Thyroid gland (tissue), 4 donors: ENCODE measurements at regions of chr1 and their contacts with region 1.

Region 1: DNA sequence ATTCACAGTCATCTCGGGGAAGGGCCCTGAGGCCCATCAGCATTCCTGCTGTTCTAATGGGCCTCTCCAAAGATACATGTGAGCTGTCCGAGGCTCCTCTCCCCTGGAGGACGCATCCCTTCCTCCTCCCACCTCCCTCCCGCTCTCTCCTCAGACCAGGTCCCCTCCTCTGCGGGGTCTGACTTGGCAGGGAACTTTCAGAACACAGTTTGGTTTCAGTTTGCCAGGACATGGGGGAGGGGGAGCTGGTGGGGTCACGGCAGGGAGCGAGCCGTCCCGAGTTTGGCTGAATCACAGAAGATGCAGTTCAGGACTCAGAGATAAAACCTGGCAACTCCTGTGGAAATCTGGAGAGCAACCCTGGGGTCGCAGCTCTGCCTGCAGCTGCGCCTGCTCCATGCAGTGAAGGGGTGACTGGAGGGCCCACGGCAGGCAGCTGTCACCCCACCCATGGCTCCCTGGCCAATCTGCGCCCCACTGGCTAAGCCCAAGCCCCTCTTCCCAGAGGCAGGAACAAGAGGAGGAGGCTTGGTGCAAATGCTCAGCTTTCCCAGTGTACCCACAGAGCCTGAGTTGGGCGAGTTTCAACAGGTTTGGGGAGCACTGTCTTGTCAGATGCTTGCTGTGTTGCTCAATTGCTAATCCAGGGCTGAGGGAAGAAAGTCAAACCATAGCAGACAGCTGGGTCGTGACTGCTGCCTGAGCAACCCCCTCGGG is 5.7 kb downstream of the WNT4 start:
- DNase-seq: no peak
- H3K4me3 ChIP-seq: no peak overlapping the region
- H3K27ac ChIP-seq: no peak overlapping the region
- H3K4me1 ChIP-seq: peaks cover 20 to 31% of the 10 kb centered on the region in 2 donors
- H3K27me3 ChIP-seq: no peaks in the 10 kb centered on the region
- CTCF ChIP-seq: no peak
- POLR2A ChIP-seq: no peak

Region 2: DNA sequence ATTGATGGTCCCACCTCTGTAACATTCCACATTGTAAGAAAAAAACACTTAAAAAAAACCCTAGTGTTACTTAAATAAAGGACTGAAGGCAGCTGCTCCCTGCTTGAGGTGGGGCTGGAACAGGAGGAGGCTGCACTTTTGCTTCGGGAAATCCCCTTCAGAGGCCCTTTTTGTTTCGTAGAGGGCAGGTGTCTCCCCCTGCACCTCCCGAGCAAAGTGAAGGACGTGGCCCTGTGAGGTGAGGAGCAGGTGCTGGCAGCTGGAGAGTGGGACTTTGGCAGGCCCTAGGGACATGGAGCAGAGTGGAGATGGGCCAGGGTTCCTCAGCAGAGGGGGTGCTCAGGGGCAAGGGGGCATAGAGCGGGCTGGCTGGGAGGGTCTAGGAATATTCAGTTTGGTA is 39.1 kb after region 1 on chr1:
- intact Hi-C with region 1: no loop called
- DNase-seq: no peak
- H3K4me3 ChIP-seq: no peak overlapping the region
- H3K27ac ChIP-seq: no peak overlapping the region
- H3K4me1 ChIP-seq: no peaks in the 10 kb centered on the region
- H3K27me3 ChIP-seq: no peaks in the 10 kb centered on the region
- CTCF ChIP-seq: no peak
- POLR2A ChIP-seq: no peak

Region 3: GRCh38 chr1:22274879-22275566 is 137.9 kb after region 1 on chr1:
- intact Hi-C with region 1: loop called (anchors 5 kb)
- DNase-seq: peak; percentile 16 to 26
- H3K4me3 ChIP-seq: no peak overlapping the region
- H3K27ac ChIP-seq: peak overlapping the region in 1 of 3 donors; percentile 58
- H3K4me1 ChIP-seq: peaks cover 6 to 9% of the 10 kb centered on the region in 2 donors
- H3K27me3 ChIP-seq: no peaks in the 10 kb centered on the region
- CTCF ChIP-seq: peak in 1 of 6 experiments; percentile 7
- POLR2A ChIP-seq: no peak